Dendritic cell treated with granulocyte-macrophage colony-stimulating factor and Interleukin-4, amounts not matched to agents 40 ng/mL and 50 ng/mL, for 4 days (primary cell): ENCODE measurements at regions of chr17 and their contacts with region 1.

Region 1: GRCh38 chr17:45148183-45149036 is at the start of gene HEXIM1:
- H3K4me3 Mint-ChIP-seq: peak within 1 kb of the TSS; percentile 87
- H3K27ac Mint-ChIP-seq: peak within 1 kb of the TSS; percentile 100
- H3K4me1 Mint-ChIP-seq: peaks cover 62% of the 10 kb centered on the region
- H3K27me3 Mint-ChIP-seq: no peaks in the 10 kb centered on the region

Region 2: GRCh38 chr17:45135192-45135977 is 13.0 kb before region 1 on chr17 and contains the start of gene ACBD4:
- intact Hi-C with region 1: loop called (anchors 2 kb)
- H3K4me3 Mint-ChIP-seq: peak within 1 kb of the TSS; percentile 87
- H3K27ac Mint-ChIP-seq: peak within 1 kb of the TSS; percentile 82
- H3K4me1 Mint-ChIP-seq: peaks cover 25% of the 10 kb centered on the region
- H3K27me3 Mint-ChIP-seq: peaks cover 15% of the 10 kb centered on the region

Region 3: DNA sequence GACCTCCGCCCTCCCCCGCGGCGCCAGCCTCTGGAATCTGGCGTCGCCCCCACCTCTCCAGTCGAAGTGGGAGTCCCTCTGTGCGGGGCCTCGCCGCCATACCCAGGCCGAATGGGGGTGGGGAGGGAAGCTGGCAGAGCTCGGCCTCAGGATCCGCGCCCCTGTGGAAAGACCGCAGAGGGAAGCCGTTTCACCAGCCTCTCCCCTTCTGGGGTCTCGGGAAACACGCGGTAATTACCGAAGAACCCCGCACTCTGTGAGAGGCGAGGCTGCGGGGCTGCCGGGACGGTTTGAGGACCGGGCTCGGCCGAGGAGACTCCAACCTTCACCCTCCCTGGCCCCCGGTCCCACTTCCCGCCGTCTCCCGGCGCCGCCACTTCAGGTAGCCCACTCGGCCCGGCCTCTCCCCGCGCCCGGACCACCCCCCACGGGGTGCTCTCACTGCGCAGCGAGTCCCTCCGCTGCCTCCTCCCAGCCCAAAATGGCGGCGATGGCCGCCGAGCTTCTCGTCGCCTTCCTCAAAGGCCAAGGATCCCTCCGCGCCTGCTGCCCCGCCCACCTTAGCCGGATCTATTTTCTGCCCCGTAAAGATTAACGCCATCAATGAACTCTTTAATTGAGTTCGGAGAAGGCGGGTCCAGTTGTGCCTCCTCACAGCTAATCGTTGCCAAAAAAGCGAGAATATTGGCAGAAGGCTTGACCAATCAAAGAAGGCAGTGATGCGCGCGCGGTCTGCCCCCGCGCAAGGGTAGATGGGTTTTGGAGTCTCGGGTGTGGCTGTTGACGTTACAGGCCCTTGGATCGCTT is 12.8 kb after region 1 on chr17:
- intact Hi-C with region 1: loop called (anchors 1 kb)
- H3K4me3 Mint-ChIP-seq: peak overlapping the region; percentile 99
- H3K27ac Mint-ChIP-seq: peak overlapping the region; percentile 97
- H3K4me1 Mint-ChIP-seq: peaks cover 55% of the 10 kb centered on the region
- H3K27me3 Mint-ChIP-seq: no peaks in the 10 kb centered on the region

Region 4: GRCh38 chr17:45197555-45198334 is 49.3 kb after region 1 on chr17:
- intact Hi-C with region 1: loop called (anchors 1 kb)
- H3K4me3 Mint-ChIP-seq: peak overlapping the region; percentile 9
- H3K27ac Mint-ChIP-seq: peak overlapping the region; percentile 56
- H3K4me1 Mint-ChIP-seq: peaks cover 39% of the 10 kb centered on the region
- H3K27me3 Mint-ChIP-seq: no peaks in the 10 kb centered on the region